Activated CD4-positive, alpha-beta memory T cell treated with anti-CD3 and anti-CD28 coated beads, Interleukin-2, amount 10 ng/mL, durations not matched to agents 7 days and 5 days (primary cell): ENCODE measurements at regions of chr7 and their contacts with region 1.

Region 1: DNA sequence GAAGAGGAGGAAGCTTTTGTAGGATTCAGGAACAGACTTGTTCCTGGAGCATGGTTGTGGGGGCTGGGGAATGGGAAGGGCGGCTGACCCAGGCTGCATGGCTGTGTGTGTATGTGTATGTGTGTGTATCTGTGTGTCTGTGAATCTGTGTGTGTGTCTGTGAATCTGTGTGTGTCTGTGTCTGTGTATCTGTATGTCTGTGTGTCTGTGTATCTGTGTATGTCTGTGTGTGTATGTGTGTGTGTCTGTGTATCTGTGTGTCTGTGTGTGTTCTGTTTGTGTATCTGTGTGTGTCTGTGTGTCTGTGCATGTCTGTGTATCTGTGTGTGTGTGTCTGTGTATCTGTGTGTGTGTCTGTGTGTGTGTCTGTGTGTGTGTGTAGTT is 6.6 kb upstream of the STX1A start:
- DNase-seq: no peak
- H3K4me3 Mint-ChIP-seq: no peak overlapping the region
- H3K27ac Mint-ChIP-seq: no peak overlapping the region
- H3K4me1 Mint-ChIP-seq: no peaks in the 10 kb centered on the region
- H3K27me3 Mint-ChIP-seq: peaks cover 22% of the 10 kb centered on the region

Region 2: GRCh38 chr7:73606801-73607691 is 119.0 kb before region 1 on chr7:
- CTCF ChIA-PET with region 1: interaction called, 54 read pairs
- POLR2A ChIA-PET with region 1: no interaction called
- DNase-seq: peak; percentile 66
- H3K4me3 Mint-ChIP-seq: no peak overlapping the region
- H3K27ac Mint-ChIP-seq: no peak overlapping the region
- H3K4me1 Mint-ChIP-seq: no peaks in the 10 kb centered on the region
- H3K27me3 Mint-ChIP-seq: peaks cover 14% of the 10 kb centered on the region

Region 3: GRCh38 chr7:73628504-73628903 is 97.6 kb before region 1 on chr7:
- CTCF ChIA-PET with region 1: interaction called, 16 read pairs
- POLR2A ChIA-PET with region 1: no interaction called
- DNase-seq: no peak
- H3K4me3 Mint-ChIP-seq: no peak overlapping the region
- H3K27ac Mint-ChIP-seq: no peak overlapping the region
- H3K4me1 Mint-ChIP-seq: peaks cover under 1% of the 10 kb centered on the region
- H3K27me3 Mint-ChIP-seq: peaks cover 35% of the 10 kb centered on the region